ENCODE measurements at regions of chr4 and their contacts with region 1.

Region 1: DNA sequence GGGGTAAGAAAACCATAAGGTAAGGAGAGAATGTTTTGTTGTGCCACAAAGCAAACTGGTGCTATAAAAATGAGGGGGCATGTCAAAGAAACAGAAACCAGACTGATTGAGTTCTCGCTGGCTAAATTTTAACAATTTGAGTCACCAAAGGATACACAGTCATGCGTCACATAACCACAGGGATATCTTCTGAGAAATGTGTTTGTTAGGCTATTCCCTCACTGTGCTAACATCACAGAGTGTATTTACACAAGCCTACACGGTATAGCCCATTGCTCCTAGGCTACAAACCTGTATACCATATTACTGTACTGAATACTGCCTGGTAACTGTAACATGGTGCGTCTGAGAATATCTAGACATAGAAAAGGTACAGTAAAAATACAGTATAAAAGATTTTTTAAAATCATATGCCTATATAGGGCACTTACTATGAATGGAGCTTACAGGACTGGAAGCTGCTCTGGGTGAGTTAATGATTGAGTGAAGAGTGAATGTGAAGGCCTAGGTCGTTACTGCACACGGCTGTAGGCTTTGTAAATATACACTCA is 50.1 kb downstream of the FBXW7 start:
- DNase-seq: peak in 13 of 35 experiments; percentile 1 to 66 (median 19)
- ATAC-seq: peak; percentile 82 to 97 (median 93)
- H3K4me3 ChIP-seq: no peak overlapping the region
- H3K4me3 Mint-ChIP-seq: peak overlapping the region in 2 of 3 donors; percentile 15 to 29
- H3K27ac ChIP-seq: no peak overlapping the region
- H3K27ac Mint-ChIP-seq: peak overlapping the region; percentile 1 to 18
- H3K4me1 ChIP-seq: peaks cover 0 to 3% of the 10 kb centered on the region in 2 experiments
- H3K4me1 Mint-ChIP-seq: peaks cover 45 to 59% (median 55%) of the 10 kb centered on the region in 3 donors
- H3K27me3 ChIP-seq: no peaks in the 10 kb centered on the region
- H3K27me3 Mint-ChIP-seq: no peaks in the 10 kb centered on the region

Region 2: GRCh38 chr4:152530600-152530999 is 44.8 kb after region 1 on chr4:
- CTCF ChIA-PET with region 1: no interaction called
- POLR2A ChIA-PET with region 1: interaction called in 1 of 2 experiments, 10 read pairs
- DNase-seq: no peak
- ATAC-seq: no peak
- H3K4me3 ChIP-seq: no peak overlapping the region
- H3K4me3 Mint-ChIP-seq: no peak overlapping the region
- H3K27ac ChIP-seq: no peak overlapping the region
- H3K27ac Mint-ChIP-seq: no peak overlapping the region
- H3K4me1 ChIP-seq: peaks cover 12 to 26% of the 10 kb centered on the region in 2 experiments
- H3K4me1 Mint-ChIP-seq: peaks cover 62 to 67% (median 66%) of the 10 kb centered on the region in 3 donors
- H3K27me3 ChIP-seq: no peaks in the 10 kb centered on the region
- H3K27me3 Mint-ChIP-seq: no peaks in the 10 kb centered on the region